ENCODE measurements at regions of chr5 and their contacts with region 1.

Region 1: DNA sequence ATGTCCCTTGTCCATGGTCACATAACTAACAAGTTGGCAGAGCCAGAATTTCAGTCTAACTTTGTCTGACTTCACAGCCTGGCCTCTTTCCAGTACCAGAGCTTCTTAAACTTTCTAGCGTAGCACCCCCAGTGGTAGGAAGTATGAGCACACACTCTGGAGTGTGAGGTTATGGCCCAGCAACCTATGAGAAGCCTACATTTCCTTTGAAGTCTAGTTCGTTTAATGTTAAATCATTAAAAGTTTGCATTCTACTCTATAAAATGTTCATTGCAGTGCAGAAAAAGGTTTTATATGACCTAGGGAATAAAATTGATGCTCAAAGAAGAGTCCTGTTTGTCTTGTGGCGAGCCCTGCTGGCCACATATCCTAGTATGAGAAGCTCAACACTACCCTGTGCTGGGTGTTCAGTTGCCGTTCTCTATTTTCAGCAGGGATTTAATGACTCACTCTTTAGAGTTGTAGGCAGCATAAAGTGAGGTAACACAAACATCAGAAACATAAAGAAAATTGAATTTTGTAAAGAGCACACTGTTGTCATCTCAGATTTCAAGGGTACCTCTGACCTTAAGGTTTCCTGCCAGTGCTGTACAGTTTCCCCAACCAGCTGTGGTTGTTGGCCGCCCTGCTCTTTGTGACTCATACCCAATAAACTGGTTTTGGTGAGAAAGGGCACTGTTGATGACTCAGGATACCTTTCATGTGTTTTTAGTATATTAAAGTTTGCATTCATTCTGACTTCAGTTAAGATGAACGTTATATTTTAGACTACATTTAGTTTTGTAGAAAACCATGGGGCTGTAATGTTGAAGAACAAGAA is 14.3 kb downstream of the MCCC2 start:
- DNase-seq: peak in 8 of 9 donors; percentile 30 to 72 (median 54)
- ATAC-seq: peak; percentile 96
- H3K4me3 ChIP-seq: no peak overlapping the region
- H3K4me3 Mint-ChIP-seq: peak overlapping the region in 4 of 10 donors; percentile 3 to 69 (median 44)
- H3K27ac ChIP-seq: peak overlapping the region; percentile 19
- H3K27ac Mint-ChIP-seq: peak overlapping the region; percentile 8 to 87 (median 69)
- H3K4me1 ChIP-seq: peaks cover 14 to 24% of the 10 kb centered on the region in 2 donors
- H3K4me1 Mint-ChIP-seq: peaks cover 6 to 31% (median 17%) of the 10 kb centered on the region in 7 donors
- H3K27me3 ChIP-seq: no peaks in the 10 kb centered on the region
- H3K27me3 Mint-ChIP-seq: no peaks in the 10 kb centered on the region

Region 2: GRCh38 chr5:71475788-71476384 is 125.5 kb before region 1 on chr5:
- CTCF ChIA-PET with region 1: interaction called, 6 read pairs
- POLR2A ChIA-PET with region 1: no interaction called
- intact Hi-C with region 1: loop called in 1 of 2 experiments (anchors 1 kb)
- DNase-seq: peak in 3 of 9 donors; percentile 5 to 15 (median 5)
- ATAC-seq: no peak
- H3K4me3 ChIP-seq: no peak overlapping the region
- H3K4me3 Mint-ChIP-seq: no peak overlapping the region
- H3K27ac ChIP-seq: no peak overlapping the region
- H3K27ac Mint-ChIP-seq: peak overlapping the region in 1 of 9 donors; percentile 60
- H3K4me1 ChIP-seq: no peaks in the 10 kb centered on the region
- H3K4me1 Mint-ChIP-seq: peaks cover 0 to 7% (median 0%) of the 10 kb centered on the region in 7 donors
- H3K27me3 ChIP-seq: no peaks in the 10 kb centered on the region
- H3K27me3 Mint-ChIP-seq: no peaks in the 10 kb centered on the region

Region 3: GRCh38 chr5:71563166-71563565 is 38.3 kb before region 1 on chr5:
- CTCF ChIA-PET with region 1: no interaction called
- POLR2A ChIA-PET with region 1: no interaction called
- intact Hi-C with region 1: loop called (anchors 5 kb)
- DNase-seq: no peak
- ATAC-seq: no peak
- H3K4me3 ChIP-seq: no peak overlapping the region
- H3K4me3 Mint-ChIP-seq: no peak overlapping the region
- H3K27ac ChIP-seq: no peak overlapping the region
- H3K27ac Mint-ChIP-seq: no peak overlapping the region
- H3K4me1 ChIP-seq: no peaks in the 10 kb centered on the region
- H3K4me1 Mint-ChIP-seq: no peaks in the 10 kb centered on the region
- H3K27me3 ChIP-seq: no peaks in the 10 kb centered on the region
- H3K27me3 Mint-ChIP-seq: no peaks in the 10 kb centered on the region

Region 4: DNA sequence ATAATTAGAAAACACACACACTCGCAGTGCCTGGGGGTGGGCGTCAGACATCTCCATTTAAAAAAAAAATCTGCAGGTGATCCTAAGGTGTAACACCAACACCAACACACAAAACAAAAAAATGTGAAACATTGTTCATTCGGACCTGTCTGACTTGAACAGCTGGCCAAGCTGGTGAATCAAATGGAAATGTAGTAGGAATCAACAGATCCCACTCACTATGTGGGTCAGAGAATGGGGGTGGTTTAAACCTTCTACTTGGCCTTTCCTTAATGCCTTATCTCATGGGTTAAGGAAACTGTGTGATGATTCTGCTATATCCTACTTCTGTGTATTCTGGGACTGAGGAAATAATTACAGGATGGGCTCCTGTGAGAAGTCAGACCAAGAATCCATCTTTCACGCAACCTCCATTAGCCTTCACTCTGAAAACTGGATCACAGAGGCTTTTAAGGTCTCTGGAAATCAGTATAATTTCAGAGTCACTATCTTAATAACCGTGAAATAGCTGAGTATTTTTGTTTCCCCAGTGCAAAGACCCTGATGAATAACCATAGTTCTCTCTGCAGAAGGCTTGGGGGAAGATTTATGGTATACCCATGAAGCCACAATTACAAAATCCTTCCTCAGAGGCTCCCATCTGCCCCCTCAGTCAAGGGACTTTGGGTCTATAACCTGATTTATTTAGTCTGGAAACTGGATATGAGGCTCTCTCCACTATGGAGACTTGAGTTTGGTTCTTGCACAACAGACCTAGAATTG is 31.5 kb before region 1 on chr5:
- CTCF ChIA-PET with region 1: no interaction called
- POLR2A ChIA-PET with region 1: no interaction called
- intact Hi-C with region 1: loop called in 1 of 2 experiments (anchors 5 kb)
- DNase-seq: no peak
- ATAC-seq: no peak
- H3K4me3 ChIP-seq: no peak overlapping the region
- H3K4me3 Mint-ChIP-seq: no peak overlapping the region
- H3K27ac ChIP-seq: no peak overlapping the region
- H3K27ac Mint-ChIP-seq: no peak overlapping the region
- H3K4me1 ChIP-seq: no peaks in the 10 kb centered on the region
- H3K4me1 Mint-ChIP-seq: no peaks in the 10 kb centered on the region
- H3K27me3 ChIP-seq: no peaks in the 10 kb centered on the region
- H3K27me3 Mint-ChIP-seq: no peaks in the 10 kb centered on the region

Region 5: GRCh38 chr5:71586941-71587765 is 14.3 kb before region 1 on chr5 and contains the start of gene MCCC2:
- CTCF ChIA-PET with region 1: interaction called, 3 read pairs
- POLR2A ChIA-PET with region 1: interaction called, 10 read pairs
- intact Hi-C with region 1: loop called (anchors 1 kb)
- DNase-seq: peak; percentile 91 to 95 (median 95)
- ATAC-seq: peak; percentile 99
- H3K4me3 ChIP-seq: peak within 1 kb of the TSS; percentile 98
- H3K4me3 Mint-ChIP-seq: peak within 1 kb of the TSS; percentile 87 to 99 (median 94)
- H3K27ac ChIP-seq: peak within 1 kb of the TSS; percentile 87
- H3K27ac Mint-ChIP-seq: peak within 1 kb of the TSS; percentile 85 to 99 (median 97)
- H3K4me1 ChIP-seq: peaks cover 16 to 34% of the 10 kb centered on the region in 2 donors
- H3K4me1 Mint-ChIP-seq: peaks cover 26 to 49% (median 36%) of the 10 kb centered on the region in 7 donors
- H3K27me3 ChIP-seq: no peaks in the 10 kb centered on the region
- H3K27me3 Mint-ChIP-seq: no peaks in the 10 kb centered on the region
- total RNA-seq, gene MCCC2: 22.4 to 41.0 (median 29.8) TPM

Region 6: GRCh38 chr5:71697967-71698366 is 96.5 kb after region 1 on chr5:
- CTCF ChIA-PET with region 1: no interaction called
- POLR2A ChIA-PET with region 1: no interaction called
- intact Hi-C with region 1: no loop called
- DNase-seq: no peak
- ATAC-seq: no peak
- H3K4me3 ChIP-seq: peak overlapping the region; percentile 20
- H3K4me3 Mint-ChIP-seq: peak overlapping the region in 6 of 10 donors; percentile 4 to 66 (median 42)
- H3K27ac ChIP-seq: no peak overlapping the region
- H3K27ac Mint-ChIP-seq: no peak overlapping the region
- H3K4me1 ChIP-seq: no peaks in the 10 kb centered on the region
- H3K4me1 Mint-ChIP-seq: peaks cover 4 to 12% (median 7%) of the 10 kb centered on the region in 7 donors
- H3K27me3 ChIP-seq: no peaks in the 10 kb centered on the region
- H3K27me3 Mint-ChIP-seq: peaks cover 13 to 22% (median 19%) of the 10 kb centered on the region in 5 donors

Measured in naive thymus-derived CD4-positive, alpha-beta T cell (primary cell).